Aorta (tissue), 5 donors: ENCODE measurements at regions of chr2 and their contacts with region 1.

Region 1: GRCh38 chr2:39379643-39380524 is 57.2 kb downstream of the MAP4K3 start:
- DNase-seq: no peak
- ATAC-seq: peak; percentile 86
- H3K4me3 ChIP-seq: no peak overlapping the region
- H3K27ac ChIP-seq: no peak overlapping the region
- H3K4me1 ChIP-seq: peaks cover 3 to 6% of the 10 kb centered on the region in 2 donors
- H3K27me3 ChIP-seq: no peaks in the 10 kb centered on the region

Region 2: DNA sequence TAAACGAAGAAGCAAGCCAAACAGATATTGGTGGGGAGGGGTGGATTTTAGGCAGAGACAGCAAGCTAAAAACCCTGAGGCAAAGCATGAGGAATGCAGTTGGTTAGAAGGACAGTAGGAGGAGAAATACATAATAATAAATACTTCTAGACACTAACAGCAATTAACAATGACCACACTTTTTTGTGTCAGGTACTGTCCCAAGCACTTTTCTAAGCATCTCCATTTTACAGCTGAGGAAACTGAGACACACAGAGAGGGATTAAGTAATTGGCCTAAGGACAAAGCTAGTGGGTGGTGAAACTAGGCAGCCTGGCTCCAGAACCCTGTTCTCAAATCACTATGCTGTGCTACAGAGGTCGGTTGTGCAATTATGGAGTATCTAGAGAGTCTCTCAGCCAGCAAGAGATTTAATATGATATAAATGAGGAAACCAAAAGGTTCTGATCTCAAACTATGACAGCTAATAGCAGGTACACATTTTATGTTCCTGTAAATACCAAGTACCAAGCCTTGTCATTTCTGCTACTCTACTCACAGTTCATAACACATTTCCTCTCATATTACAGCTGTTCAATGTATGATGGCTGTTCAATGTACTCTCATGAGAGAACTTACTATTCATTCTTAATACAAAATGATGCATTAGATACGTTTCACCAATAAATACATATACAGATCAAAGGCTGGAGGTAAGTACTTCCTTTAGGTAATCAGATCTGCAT is 51.9 kb after region 1 on chr2:
- intact Hi-C with region 1: loop called (anchors 5 kb)
- DNase-seq: no peak
- ATAC-seq: no peak
- H3K4me3 ChIP-seq: no peak overlapping the region
- H3K27ac ChIP-seq: no peak overlapping the region
- H3K4me1 ChIP-seq: peaks cover 7 to 9% of the 10 kb centered on the region in 2 donors
- H3K27me3 ChIP-seq: no peaks in the 10 kb centered on the region

Region 3: DNA sequence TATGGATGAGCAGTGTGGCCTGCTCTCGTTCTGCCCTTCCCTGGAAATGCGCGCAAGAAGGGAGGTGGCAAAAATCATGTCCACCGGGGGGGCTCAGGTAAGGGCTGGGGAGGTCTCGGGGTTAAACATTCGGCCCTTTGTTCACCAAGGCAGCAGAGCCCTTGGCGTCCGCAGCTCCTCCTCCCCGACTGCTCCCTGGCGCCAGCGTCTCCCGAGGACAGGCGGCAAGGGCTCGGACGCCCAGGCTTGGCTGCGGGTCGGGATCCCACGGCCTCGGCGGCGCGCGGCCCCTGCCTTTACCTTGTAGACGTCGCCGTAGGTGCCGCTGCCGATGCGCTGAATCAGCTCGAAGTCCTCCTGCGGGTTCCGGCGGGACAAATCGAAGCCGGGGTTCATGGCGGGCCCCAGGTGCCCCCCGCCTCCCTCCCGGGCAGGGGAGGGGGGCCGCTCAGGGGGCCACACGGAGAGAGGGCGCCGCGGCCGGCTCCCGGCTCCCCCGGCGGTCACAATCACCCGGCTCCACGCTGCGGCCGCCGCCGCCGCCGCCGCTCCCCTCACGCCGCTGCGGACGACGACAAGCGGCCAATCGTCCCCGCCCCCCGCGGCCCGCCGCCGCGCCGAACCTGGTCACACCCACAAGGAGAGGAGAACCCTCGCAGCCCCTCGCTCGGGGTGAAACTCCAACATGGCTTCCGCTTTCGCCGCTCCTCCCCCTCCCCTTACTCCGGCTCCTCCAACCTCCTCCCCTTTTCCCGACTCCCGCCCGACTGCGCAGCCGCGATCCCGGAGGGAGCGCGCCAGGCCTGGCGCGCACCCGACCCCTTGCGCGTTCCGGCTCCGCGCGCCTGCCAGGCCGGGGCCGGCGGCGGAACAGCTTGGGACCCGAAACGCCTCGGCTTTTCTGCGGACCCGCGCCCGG is 57.0 kb after region 1 on chr2 and contains the start of gene MAP4K3:
- intact Hi-C with region 1: loop called (anchors 5 kb)
- DNase-seq: peak; percentile 95 to 98
- ATAC-seq: peak; percentile 94
- H3K4me3 ChIP-seq: peak within 1 kb of the TSS; percentile 86 to 96
- H3K27ac ChIP-seq: peak within 1 kb of the TSS; percentile 53 to 89
- H3K4me1 ChIP-seq: peaks cover 3 to 5% of the 10 kb centered on the region in 2 donors
- H3K27me3 ChIP-seq: no peaks in the 10 kb centered on the region
- total RNA-seq, gene MAP4K3: 42.1 to 50.8 TPM